ENCODE measurements at regions of chr3 and their contacts with region 1.

Region 1: GRCh38 chr3:46078712-46079400 is 51.6 kb upstream of the XCR1 start:
- DNase-seq: peak; percentile 96
- H3K4me3 ChIP-seq: no peak overlapping the region
- H3K27ac ChIP-seq: no peak overlapping the region
- H3K4me1 ChIP-seq: no peaks in the 10 kb centered on the region
- H3K27me3 ChIP-seq: no peaks in the 10 kb centered on the region
- CTCF ChIP-seq: peak; percentile 94

Region 2: DNA sequence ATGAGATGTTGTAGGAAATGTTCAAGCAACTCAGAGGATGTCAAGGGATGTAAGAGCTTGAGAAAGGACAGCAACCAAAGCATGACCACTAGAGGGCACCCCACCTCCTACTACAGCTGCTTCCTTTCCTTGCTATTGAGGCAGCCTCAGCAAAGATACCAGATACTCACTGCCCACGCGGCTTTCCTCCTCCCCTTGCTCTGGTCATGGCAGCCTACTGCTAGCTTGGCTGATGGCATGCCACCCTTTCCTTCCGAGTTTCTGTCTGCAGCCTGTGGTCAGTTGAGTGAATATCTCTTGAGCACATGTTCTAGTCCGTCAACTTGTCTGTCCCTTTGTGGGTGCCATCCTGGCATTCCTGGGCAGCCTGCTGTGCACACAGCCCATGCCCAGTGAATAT is 140.0 kb before region 1 on chr3:
- intact Hi-C with region 1: loop called (anchors 2 kb)
- DNase-seq: peak; percentile 85
- H3K4me3 ChIP-seq: no peak overlapping the region
- H3K27ac ChIP-seq: no peak overlapping the region
- H3K4me1 ChIP-seq: no peaks in the 10 kb centered on the region
- H3K27me3 ChIP-seq: no peaks in the 10 kb centered on the region
- CTCF ChIP-seq: peak; percentile 81

Region 3: GRCh38 chr3:46372492-46373359 is 293.9 kb after region 1 on chr3:
- intact Hi-C with region 1: loop called (anchors 5 kb)
- DNase-seq: no peak
- H3K4me3 ChIP-seq: no peak overlapping the region
- H3K27ac ChIP-seq: no peak overlapping the region
- H3K4me1 ChIP-seq: no peaks in the 10 kb centered on the region
- H3K27me3 ChIP-seq: no peaks in the 10 kb centered on the region
- CTCF ChIP-seq: peak; percentile 19

Measured in colonic mucosa (tissue), 4 donors.